ENCODE measurements at regions of chr3 and their contacts with region 1.

Region 1: GRCh38 chr3:187738331-187739093 is 6.8 kb downstream of the BCL6 start:
- DNase-seq: peak; percentile 87
- H3K4me3 ChIP-seq: peak overlapping the region; percentile 47 to 82 (median 58)
- H3K27ac ChIP-seq: peak overlapping the region; percentile 94
- H3K4me1 ChIP-seq: peaks cover 46% of the 10 kb centered on the region
- H3K27me3 ChIP-seq: no peaks in the 10 kb centered on the region
- CTCF ChIP-seq: peak; percentile 79 to 83
- POLR2A ChIP-seq: no peak

Region 2: GRCh38 chr3:187725653-187726370 is 12.7 kb before region 1 on chr3:
- CTCF ChIA-PET with region 1: interaction called, 10 read pairs
- POLR2A ChIA-PET with region 1: no interaction called
- dilution Hi-C with region 1: no loop called
- intact Hi-C with region 1: no loop called
- DNase-seq: no peak
- H3K4me3 ChIP-seq: no peak overlapping the region
- H3K27ac ChIP-seq: no peak overlapping the region
- H3K4me1 ChIP-seq: no peaks in the 10 kb centered on the region
- H3K27me3 ChIP-seq: no peaks in the 10 kb centered on the region
- CTCF ChIP-seq: no peak
- POLR2A ChIP-seq: no peak

Region 3: DNA sequence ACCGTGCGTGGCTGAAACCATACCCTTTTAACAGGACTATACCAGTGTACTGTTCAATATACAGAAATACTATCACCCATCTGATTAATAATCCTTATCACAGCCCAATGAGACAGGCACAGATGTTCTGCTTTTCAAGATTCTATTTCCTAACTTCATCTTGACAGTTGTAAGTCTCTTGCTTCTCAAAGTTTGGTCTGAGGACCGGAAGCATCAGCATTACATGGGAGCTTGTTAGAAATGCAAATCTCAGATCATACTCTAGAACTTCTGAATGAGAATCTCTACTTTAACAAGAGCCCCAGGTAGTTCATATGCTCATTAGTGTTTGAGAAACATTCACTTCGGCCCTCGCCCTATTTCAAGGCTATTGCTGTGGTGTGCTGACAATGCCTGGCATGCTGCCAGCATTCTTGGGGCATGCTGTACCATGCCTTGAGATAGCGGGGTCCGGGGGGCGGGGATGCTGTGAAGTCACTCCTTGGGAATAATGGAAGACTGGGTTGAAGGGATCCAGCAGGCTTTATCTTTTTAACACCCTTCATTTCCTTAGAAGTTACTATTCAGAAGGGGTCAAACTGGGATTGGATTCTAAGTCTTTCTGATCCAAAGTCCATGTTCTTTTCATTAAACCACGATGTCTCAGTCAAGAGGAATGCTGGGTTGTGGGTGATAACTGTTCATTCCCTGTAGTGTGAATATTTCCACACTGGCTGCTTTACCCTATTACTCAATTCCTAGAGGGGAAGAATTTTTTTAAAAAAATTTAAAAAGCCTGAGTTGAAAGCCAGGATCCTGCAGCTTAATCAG is 610.1 kb after region 1 on chr3:
- CTCF ChIA-PET with region 1: interaction called, 6 read pairs
- POLR2A ChIA-PET with region 1: no interaction called
- dilution Hi-C with region 1: no loop called
- intact Hi-C with region 1: loop called (anchors 5 kb)
- DNase-seq: peak; percentile 88
- H3K4me3 ChIP-seq: no peak overlapping the region
- H3K27ac ChIP-seq: peak overlapping the region; percentile 62
- H3K4me1 ChIP-seq: peaks cover 28% of the 10 kb centered on the region
- H3K27me3 ChIP-seq: no peaks in the 10 kb centered on the region
- CTCF ChIP-seq: no peak
- POLR2A ChIP-seq: no peak

Region 4: GRCh38 chr3:188594139-188594538 is 855.6 kb after region 1 on chr3:
- CTCF ChIA-PET with region 1: interaction called, 7 read pairs
- POLR2A ChIA-PET with region 1: no interaction called
- dilution Hi-C with region 1: no loop called
- intact Hi-C with region 1: loop called (anchors 2 kb)
- DNase-seq: peak; percentile 86
- H3K4me3 ChIP-seq: no peak overlapping the region
- H3K27ac ChIP-seq: peak overlapping the region; percentile 50
- H3K4me1 ChIP-seq: peaks cover 25% of the 10 kb centered on the region
- H3K27me3 ChIP-seq: no peaks in the 10 kb centered on the region
- CTCF ChIP-seq: no peak
- POLR2A ChIP-seq: no peak

Region 5: GRCh38 chr3:188830893-188831292 is 1092.4 kb after region 1 on chr3:
- CTCF ChIA-PET with region 1: interaction called, 3 read pairs
- POLR2A ChIA-PET with region 1: no interaction called
- dilution Hi-C with region 1: no loop called
- intact Hi-C with region 1: loop called (anchors 2 kb)
- DNase-seq: no peak
- H3K4me3 ChIP-seq: no peak overlapping the region
- H3K27ac ChIP-seq: no peak overlapping the region
- H3K4me1 ChIP-seq: no peaks in the 10 kb centered on the region
- H3K27me3 ChIP-seq: no peaks in the 10 kb centered on the region
- CTCF ChIP-seq: peak; percentile 30 to 41
- POLR2A ChIP-seq: no peak

Region 6: GRCh38 chr3:188954590-188955208 is 1216.2 kb after region 1 on chr3:
- CTCF ChIA-PET with region 1: interaction called, 466 read pairs
- POLR2A ChIA-PET with region 1: interaction called, 10 read pairs
- dilution Hi-C with region 1: loop called (anchors 5 kb)
- intact Hi-C with region 1: loop called (anchors 1 kb)
- DNase-seq: peak; percentile 84
- H3K4me3 ChIP-seq: no peak overlapping the region
- H3K27ac ChIP-seq: no peak overlapping the region
- H3K4me1 ChIP-seq: peaks cover 21% of the 10 kb centered on the region
- H3K27me3 ChIP-seq: no peaks in the 10 kb centered on the region
- CTCF ChIP-seq: peak; percentile 84 to 95
- POLR2A ChIP-seq: no peak

Region 7: DNA sequence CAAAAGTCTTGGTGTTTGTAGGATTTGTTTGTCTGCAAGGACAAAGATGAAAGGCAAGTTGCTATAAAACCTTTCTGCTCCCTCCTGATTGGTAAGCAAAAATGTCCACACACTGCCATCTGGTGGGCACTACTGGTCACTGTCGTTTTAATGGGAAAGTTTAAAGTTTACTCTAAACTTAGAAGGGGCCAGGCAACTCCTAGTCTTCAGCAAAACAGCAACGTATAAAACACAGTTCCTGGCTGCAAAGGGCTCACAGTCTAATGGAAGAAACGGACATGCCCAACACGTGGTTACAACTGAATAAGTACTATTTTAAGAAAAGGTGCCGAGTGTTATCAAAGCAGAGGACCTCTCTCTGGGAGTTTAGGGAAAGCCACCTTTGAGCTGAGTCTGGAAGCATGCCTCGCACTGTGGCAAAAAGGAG is 1409.6 kb after region 1 on chr3:
- CTCF ChIA-PET with region 1: interaction called, 77 read pairs
- POLR2A ChIA-PET with region 1: no interaction called
- dilution Hi-C with region 1: no loop called
- intact Hi-C with region 1: loop called (anchors 1 kb)
- DNase-seq: peak; percentile 71
- H3K4me3 ChIP-seq: no peak overlapping the region
- H3K27ac ChIP-seq: no peak overlapping the region
- H3K4me1 ChIP-seq: no peaks in the 10 kb centered on the region
- H3K27me3 ChIP-seq: peaks cover 5 to 8% of the 10 kb centered on the region in 2 experiments
- CTCF ChIP-seq: peak; percentile 61 to 70
- POLR2A ChIP-seq: no peak